Posterior cingulate gyrus (tissue), 11 donors: ENCODE measurements at regions of chr4 and their contacts with region 1.

Region 1: GRCh38 chr4:46270986-46271596 is 118.8 kb downstream of the GABRA2 start:
- DNase-seq: no peak

Region 2: GRCh38 chr4:44760142-44760898 is 1510.8 kb before region 1 on chr4:
- intact Hi-C with region 1: loop called (anchors 5 kb)
- DNase-seq: no peak

Region 3: DNA sequence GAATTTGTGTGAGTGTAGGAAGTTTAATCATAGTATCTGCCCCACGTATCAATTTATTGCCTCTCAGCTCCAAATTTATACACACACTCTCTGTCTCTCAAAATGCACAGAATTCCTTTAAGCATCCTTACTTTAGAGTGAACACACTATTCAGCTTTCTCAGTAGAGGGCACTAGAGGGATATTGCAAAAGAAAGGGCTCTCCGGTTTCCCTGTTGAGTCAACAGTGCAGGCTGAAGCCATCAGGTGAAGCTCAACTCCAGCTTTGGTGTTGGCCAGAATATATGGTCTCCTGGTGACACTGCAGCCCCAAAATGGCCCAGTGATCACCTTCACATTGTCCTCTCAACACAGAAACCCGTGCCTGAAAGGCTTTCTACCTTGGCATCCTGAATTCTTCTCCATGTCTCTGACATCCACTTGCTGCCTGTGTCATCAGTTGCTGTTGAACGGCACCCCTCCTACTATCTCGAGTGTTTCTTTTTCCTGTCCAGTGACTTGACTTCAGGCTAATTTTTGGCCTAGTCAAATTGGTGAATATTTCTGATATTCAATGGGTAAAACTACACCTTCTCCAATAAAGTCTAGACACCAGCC is 817.7 kb before region 1 on chr4:
- intact Hi-C with region 1: loop called (anchors 5 kb)
- DNase-seq: no peak

Region 4: DNA sequence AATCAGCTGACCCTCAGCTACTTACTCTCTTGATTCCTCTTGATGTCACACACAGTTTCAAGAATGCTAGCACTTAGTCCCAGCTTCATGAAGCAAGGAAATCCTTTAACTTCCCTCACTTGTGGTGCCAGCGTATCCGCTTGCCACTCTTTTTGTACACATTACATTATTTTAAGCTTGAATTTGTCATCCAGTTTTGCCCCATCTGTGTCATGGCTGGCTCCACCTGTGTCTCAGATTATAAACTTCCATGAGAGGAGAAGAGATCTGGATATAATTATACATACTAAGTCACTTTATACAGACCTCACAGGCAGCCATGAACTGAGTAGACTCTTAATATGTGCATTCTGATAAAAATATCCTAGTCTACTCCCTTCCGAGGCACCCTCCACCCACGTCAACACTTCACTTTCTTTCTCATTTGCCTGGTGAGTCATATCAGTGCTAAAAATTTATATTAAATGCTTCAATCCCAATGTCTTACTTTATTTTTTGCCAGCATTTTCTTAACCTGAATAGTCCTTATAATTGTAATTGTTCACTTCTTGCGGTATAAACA is 83.7 kb after region 1 on chr4:
- intact Hi-C with region 1: no loop called
- DNase-seq: peak in 3 of 10 donors; percentile 14 to 43 (median 20)